Activated CD8-positive, alpha-beta T cell treated with anti-CD3 and anti-CD28 coated beads for 36 hours (primary cell): ENCODE measurements at regions of chr3 and their contacts with region 1.

Region 1: GRCh38 chr3:56702490-56703315 is 19.6 kb upstream of the TASOR start:
- DNase-seq: peak; percentile 68
- ATAC-seq: peak; percentile 65
- H3K4me3 Mint-ChIP-seq: no peak overlapping the region
- H3K27ac Mint-ChIP-seq: no peak overlapping the region
- H3K4me1 Mint-ChIP-seq: peaks cover 22% of the 10 kb centered on the region
- H3K27me3 Mint-ChIP-seq: no peaks in the 10 kb centered on the region
- CTCF ChIP-seq: peak; percentile 96

Region 2: GRCh38 chr3:56753206-56753820 is 50.6 kb after region 1 on chr3:
- CTCF ChIA-PET with region 1: interaction called, 15 read pairs
- POLR2A ChIA-PET with region 1: no interaction called
- intact Hi-C with region 1: no loop called
- DNase-seq: peak; percentile 75
- ATAC-seq: peak; percentile 93
- H3K4me3 Mint-ChIP-seq: no peak overlapping the region
- H3K27ac Mint-ChIP-seq: peak overlapping the region; percentile 73
- H3K4me1 Mint-ChIP-seq: peaks cover 63% of the 10 kb centered on the region
- H3K27me3 Mint-ChIP-seq: no peaks in the 10 kb centered on the region
- CTCF ChIP-seq: no peak

Region 3: DNA sequence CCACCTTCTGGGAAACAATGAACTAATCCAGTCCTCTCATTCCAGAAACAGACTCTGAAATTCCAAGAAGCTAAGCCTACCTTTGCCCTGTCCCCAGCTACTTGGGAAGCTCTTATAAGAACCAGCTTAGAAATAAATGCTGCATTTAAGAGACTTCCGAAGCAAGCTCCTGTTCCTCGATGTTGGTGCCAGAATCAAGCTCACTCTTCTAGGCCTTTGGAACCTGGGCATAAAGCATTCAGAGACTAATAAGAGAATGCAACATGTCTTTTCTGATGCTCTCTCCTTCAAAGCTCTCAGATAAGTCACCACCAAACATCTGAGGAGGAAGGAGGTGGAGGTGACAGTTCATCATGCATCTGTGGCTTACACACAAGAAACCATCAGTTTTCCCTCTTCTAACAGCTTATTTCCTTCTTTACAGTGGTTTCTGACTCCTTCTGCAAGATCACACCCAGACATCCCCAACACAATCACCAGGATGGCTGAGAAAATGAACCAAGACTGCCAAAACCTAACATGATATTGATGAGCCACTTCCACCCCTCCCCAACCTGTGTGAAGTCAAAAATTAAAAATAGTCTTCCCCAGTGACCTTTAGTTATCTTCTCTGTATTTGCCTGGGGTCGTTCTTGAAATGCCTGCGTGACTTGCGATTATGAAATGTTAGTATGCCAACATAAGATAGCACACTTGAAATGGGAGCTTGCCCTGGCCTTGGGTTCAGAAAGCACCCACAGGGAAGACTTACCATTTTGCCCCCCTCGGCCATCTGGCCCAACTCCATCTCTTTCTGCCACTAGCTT is 87.5 kb after region 1 on chr3:
- CTCF ChIA-PET with region 1: interaction called, 13 read pairs
- POLR2A ChIA-PET with region 1: interaction called, 3 read pairs
- intact Hi-C with region 1: no loop called
- DNase-seq: peak; percentile 55
- ATAC-seq: peak; percentile 57
- H3K4me3 Mint-ChIP-seq: peak overlapping the region; percentile 43
- H3K27ac Mint-ChIP-seq: peak overlapping the region; percentile 92
- H3K4me1 Mint-ChIP-seq: peaks cover 86% of the 10 kb centered on the region
- H3K27me3 Mint-ChIP-seq: no peaks in the 10 kb centered on the region
- CTCF ChIP-seq: no peak

Region 4: DNA sequence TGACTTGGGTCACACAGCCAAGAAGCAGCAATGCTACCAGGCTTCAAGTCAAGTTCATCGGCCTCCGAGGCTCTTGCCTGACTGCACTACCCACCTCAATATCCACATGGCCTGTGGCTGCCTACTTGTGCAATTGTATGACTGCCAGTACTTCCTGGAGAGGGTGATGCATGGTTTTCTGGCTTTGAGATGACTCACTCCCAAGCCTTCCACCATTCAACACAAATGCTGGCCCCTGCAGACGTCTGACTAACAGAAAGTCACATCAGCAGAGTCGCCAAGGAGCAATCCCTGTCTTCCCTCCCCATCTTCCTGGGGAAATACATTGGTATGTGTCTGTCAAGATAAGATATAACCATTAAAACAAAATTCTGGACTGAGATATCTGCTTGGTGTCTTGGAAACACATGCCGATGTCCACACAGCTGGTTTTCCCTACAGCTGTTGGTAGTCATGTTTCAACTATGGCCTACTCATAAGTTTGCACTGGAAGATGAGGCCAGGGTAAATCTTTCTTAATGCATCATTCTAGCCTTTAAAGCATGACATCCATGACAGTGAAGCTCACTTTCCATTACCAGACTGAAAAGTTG is 278.2 kb after region 1 on chr3:
- CTCF ChIA-PET with region 1: interaction called, 203 read pairs
- POLR2A ChIA-PET with region 1: no interaction called
- intact Hi-C with region 1: no loop called
- DNase-seq: peak; percentile 83
- ATAC-seq: peak; percentile 96
- H3K4me3 Mint-ChIP-seq: no peak overlapping the region
- H3K27ac Mint-ChIP-seq: peak overlapping the region; percentile 43
- H3K4me1 Mint-ChIP-seq: peaks cover 35% of the 10 kb centered on the region
- H3K27me3 Mint-ChIP-seq: no peaks in the 10 kb centered on the region
- CTCF ChIP-seq: no peak

Region 5: GRCh38 chr3:56997675-56998074 is 295.0 kb after region 1 on chr3:
- CTCF ChIA-PET with region 1: interaction called, 15 read pairs
- POLR2A ChIA-PET with region 1: no interaction called
- intact Hi-C with region 1: no loop called
- DNase-seq: no peak
- ATAC-seq: no peak
- H3K4me3 Mint-ChIP-seq: no peak overlapping the region
- H3K27ac Mint-ChIP-seq: no peak overlapping the region
- H3K4me1 Mint-ChIP-seq: no peaks in the 10 kb centered on the region
- H3K27me3 Mint-ChIP-seq: no peaks in the 10 kb centered on the region
- CTCF ChIP-seq: no peak